Naive thymus-derived CD4-positive, alpha-beta T cell (primary cell): ENCODE measurements at regions of chr3 and their contacts with region 1.

Region 1: DNA sequence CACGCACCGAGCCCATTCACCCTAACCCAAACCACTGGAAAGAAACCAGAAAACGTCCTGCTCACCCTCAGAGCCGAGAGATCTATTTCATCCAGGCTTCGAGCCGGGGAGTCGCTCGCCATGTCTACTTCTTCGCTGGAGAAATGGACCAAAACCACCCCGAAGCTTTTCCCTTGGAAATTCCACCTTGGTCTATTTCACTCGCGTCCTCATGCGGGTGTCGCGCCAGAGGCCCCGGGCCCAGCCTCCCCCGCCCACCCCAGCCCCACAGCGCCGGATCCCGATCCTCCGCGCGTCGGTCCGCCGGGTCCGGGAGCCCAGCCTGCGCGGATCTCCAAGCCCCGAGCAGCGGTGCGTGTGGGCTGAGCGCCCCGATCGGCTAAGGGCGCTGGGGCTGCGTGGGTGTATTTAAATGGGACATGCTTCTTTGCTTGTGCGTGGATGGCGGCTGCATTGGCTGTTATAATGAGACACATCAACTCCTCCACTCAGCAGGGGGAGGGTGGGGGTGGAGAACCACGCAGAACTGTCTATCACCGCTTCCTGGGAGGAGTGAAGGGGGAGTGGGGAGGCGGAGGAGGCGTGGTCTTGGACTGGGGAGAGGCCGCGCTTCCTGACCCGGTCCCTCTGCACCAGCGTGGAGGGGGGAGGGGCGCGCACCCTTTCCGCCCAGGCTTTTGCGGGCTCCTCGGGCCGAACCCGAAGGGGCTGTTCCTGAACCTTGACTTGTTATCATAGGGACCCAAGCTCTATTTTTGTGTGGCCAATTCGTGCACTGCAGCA is at the start of gene TNIK:
- DNase-seq: peak; percentile 73 to 99 (median 91)
- ATAC-seq: peak; percentile 92
- H3K4me3 ChIP-seq: peak within 1 kb of the TSS; percentile 87
- H3K4me3 Mint-ChIP-seq: peak within 1 kb of the TSS; percentile 91 to 98 (median 94)
- H3K27ac ChIP-seq: peak within 1 kb of the TSS; percentile 81
- H3K27ac Mint-ChIP-seq: peak within 1 kb of the TSS; percentile 88 to 96 (median 91)
- H3K4me1 ChIP-seq: peaks cover 15 to 29% of the 10 kb centered on the region in 2 donors
- H3K4me1 Mint-ChIP-seq: peaks cover 19 to 46% (median 45%) of the 10 kb centered on the region in 7 donors
- H3K27me3 ChIP-seq: no peaks in the 10 kb centered on the region
- H3K27me3 Mint-ChIP-seq: no peaks in the 10 kb centered on the region
- total RNA-seq, gene TNIK: 61.6 to 74.9 (median 73.6) TPM

Region 2: GRCh38 chr3:170357176-170357919 is 1102.8 kb before region 1 on chr3 and contains the start of gene SKIL:
- CTCF ChIA-PET with region 1: no interaction called
- POLR2A ChIA-PET with region 1: no interaction called
- intact Hi-C with region 1: loop called in 1 of 2 experiments (anchors 1 kb)
- DNase-seq: peak; percentile 93 to 98 (median 96)
- ATAC-seq: peak; percentile 84
- H3K4me3 ChIP-seq: peak within 1 kb of the TSS; percentile 63
- H3K4me3 Mint-ChIP-seq: peak within 1 kb of the TSS; percentile 80 to 96 (median 94)
- H3K27ac ChIP-seq: peak within 1 kb of the TSS; percentile 99
- H3K27ac Mint-ChIP-seq: peak within 1 kb of the TSS; percentile 91 to 99 (median 97)
- H3K4me1 ChIP-seq: peaks cover 7 to 13% of the 10 kb centered on the region in 2 donors
- H3K4me1 Mint-ChIP-seq: peaks cover 28 to 68% (median 60%) of the 10 kb centered on the region in 7 donors
- H3K27me3 ChIP-seq: no peaks in the 10 kb centered on the region
- H3K27me3 Mint-ChIP-seq: peaks cover 0 to 26% (median 0%) of the 10 kb centered on the region in 5 donors
- total RNA-seq, gene SKIL: 19.1 to 80.5 (median 40.9) TPM

Region 3: GRCh38 chr3:170414202-170414663 is 1045.9 kb before region 1 on chr3:
- CTCF ChIA-PET with region 1: no interaction called
- POLR2A ChIA-PET with region 1: no interaction called
- intact Hi-C with region 1: no loop called
- DNase-seq: peak in 6 of 9 donors; percentile 25 to 58 (median 48)
- ATAC-seq: peak; percentile 75
- H3K4me3 ChIP-seq: no peak overlapping the region
- H3K4me3 Mint-ChIP-seq: no peak overlapping the region
- H3K27ac ChIP-seq: no peak overlapping the region
- H3K27ac Mint-ChIP-seq: no peak overlapping the region
- H3K4me1 ChIP-seq: peaks cover 4 to 7% of the 10 kb centered on the region in 2 donors
- H3K4me1 Mint-ChIP-seq: peaks cover 5 to 15% (median 7%) of the 10 kb centered on the region in 7 donors
- H3K27me3 ChIP-seq: peaks cover 0 to 8% of the 10 kb centered on the region in 2 donors
- H3K27me3 Mint-ChIP-seq: peaks cover 14 to 40% (median 17%) of the 10 kb centered on the region in 5 donors

Region 4: DNA sequence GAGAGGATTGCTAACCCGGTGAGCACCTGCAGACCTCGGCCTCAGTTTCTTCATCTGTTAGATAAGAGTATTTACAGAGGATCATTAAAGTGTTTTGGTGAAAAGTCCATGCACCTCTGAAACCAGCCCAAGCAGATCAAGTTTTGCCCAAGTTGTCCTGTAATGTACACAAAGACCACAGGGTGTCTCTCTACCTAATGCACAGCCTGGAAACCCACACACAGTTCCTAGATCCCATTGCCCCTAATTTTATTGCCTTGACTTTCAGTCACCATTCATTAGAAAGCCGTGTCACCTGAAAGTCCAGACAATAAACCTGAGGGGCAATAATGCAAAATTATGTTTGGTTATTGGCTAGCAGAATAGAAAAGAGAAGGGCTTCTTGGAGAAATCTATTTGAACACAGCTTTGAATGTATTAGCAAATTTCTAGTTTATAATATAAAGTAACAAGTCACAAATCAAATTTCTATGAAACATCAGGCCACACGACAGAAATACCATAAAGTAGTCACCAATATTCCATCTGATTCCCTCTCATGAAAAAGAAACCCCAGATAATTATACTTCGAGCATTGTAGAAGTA is 272.3 kb before region 1 on chr3:
- CTCF ChIA-PET with region 1: interaction called, 3 read pairs
- POLR2A ChIA-PET with region 1: interaction called, 5 read pairs
- intact Hi-C with region 1: loop called (anchors 1 to 2 kb)
- DNase-seq: peak in 5 of 9 donors; percentile 6 to 43 (median 31)
- ATAC-seq: peak; percentile 68
- H3K4me3 ChIP-seq: no peak overlapping the region
- H3K4me3 Mint-ChIP-seq: no peak overlapping the region
- H3K27ac ChIP-seq: no peak overlapping the region
- H3K27ac Mint-ChIP-seq: no peak overlapping the region
- H3K4me1 ChIP-seq: no peaks in the 10 kb centered on the region
- H3K4me1 Mint-ChIP-seq: peaks cover 9 to 50% (median 19%) of the 10 kb centered on the region in 7 donors
- H3K27me3 ChIP-seq: no peaks in the 10 kb centered on the region
- H3K27me3 Mint-ChIP-seq: no peaks in the 10 kb centered on the region

Region 5: DNA sequence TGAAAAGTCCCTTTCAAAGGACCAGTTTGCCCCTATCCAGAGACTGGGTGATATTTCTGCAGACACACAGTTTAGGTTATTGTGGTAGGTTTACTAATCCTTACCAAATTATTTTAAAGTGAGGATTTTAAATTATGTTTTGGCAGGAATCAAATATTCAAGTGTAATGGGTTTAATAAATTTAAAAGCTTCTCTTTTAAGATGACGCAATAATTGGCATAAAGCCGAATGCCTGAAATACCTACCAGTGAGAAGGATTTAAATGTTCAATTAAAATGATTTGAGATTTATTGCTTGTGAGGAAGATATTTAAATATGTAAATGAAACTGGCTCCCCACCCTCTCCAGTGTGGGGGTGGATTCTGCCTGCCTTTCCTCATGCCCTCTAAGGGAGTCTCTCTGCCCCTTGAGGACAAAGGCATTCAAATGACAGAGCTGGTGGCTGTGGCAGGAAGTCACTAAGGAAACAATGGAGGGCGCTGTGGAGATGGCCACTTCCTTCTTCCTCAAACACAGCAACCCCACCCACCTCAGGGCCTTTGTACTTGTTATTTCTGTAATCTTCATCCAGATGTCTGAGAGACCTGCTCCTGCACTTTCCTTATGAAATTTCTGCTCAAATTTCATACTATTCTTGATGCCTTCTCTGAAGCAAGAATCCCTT is 131.6 kb before region 1 on chr3:
- CTCF ChIA-PET with region 1: no interaction called
- POLR2A ChIA-PET with region 1: interaction called, 4 read pairs
- intact Hi-C with region 1: loop called (anchors 1 kb)
- DNase-seq: peak in 8 of 9 donors; percentile 26 to 68 (median 58)
- ATAC-seq: peak; percentile 93
- H3K4me3 ChIP-seq: no peak overlapping the region
- H3K4me3 Mint-ChIP-seq: peak overlapping the region in 9 of 10 donors; percentile 13 to 71 (median 46)
- H3K27ac ChIP-seq: no peak overlapping the region
- H3K27ac Mint-ChIP-seq: peak overlapping the region in 6 of 9 donors; percentile 48 to 83 (median 62)
- H3K4me1 ChIP-seq: peaks cover 12 to 17% of the 10 kb centered on the region in 2 donors
- H3K4me1 Mint-ChIP-seq: peaks cover 20 to 81% (median 71%) of the 10 kb centered on the region in 7 donors
- H3K27me3 ChIP-seq: no peaks in the 10 kb centered on the region
- H3K27me3 Mint-ChIP-seq: no peaks in the 10 kb centered on the region

Region 6: GRCh38 chr3:171543759-171544654 is 83.9 kb after region 1 on chr3:
- CTCF ChIA-PET with region 1: no interaction called
- POLR2A ChIA-PET with region 1: no interaction called
- intact Hi-C with region 1: no loop called
- DNase-seq: no peak
- ATAC-seq: no peak
- H3K4me3 ChIP-seq: no peak overlapping the region
- H3K4me3 Mint-ChIP-seq: no peak overlapping the region
- H3K27ac ChIP-seq: no peak overlapping the region
- H3K27ac Mint-ChIP-seq: peak overlapping the region in 1 of 9 donors; percentile 9
- H3K4me1 ChIP-seq: peaks cover 0 to 4% of the 10 kb centered on the region in 2 donors
- H3K4me1 Mint-ChIP-seq: peaks cover 0 to 12% (median 5%) of the 10 kb centered on the region in 7 donors
- H3K27me3 ChIP-seq: no peaks in the 10 kb centered on the region
- H3K27me3 Mint-ChIP-seq: peaks cover 0 to 2% (median 0%) of the 10 kb centered on the region in 5 donors

Region 7: DNA sequence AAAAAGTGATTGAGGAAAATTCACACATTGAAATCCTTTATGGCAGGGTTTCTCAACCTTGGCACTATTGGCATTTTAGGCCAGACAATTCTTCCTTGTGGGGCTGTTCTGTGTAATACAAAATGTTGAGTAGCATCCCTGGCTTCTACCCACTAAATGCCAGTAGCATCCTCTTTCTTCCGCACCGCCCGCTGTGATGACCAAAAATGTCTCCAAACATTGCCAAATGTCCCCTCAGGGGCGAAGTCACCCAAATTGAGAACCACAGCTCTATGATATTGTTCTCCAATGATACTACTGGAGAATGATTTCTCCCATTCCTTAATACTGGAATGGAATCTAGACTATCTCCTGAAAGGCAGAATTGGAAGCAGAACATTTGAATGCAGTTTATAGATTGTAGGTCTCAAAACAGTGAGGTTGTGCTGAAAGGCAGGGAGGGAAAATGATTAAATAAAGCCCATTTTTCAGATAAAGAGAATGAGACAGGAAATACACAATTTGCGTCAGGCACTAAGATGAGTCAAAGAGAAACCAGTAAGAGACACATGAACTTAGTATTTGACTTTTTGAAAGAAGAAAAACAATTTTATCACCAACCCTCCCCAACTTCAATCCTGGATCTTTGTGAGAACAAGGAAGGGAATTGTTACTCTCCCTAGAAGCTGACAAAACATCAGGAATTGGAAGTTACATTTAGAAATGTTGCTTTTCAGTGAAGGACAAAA is 101.6 kb after region 1 on chr3:
- CTCF ChIA-PET with region 1: interaction called, 3 read pairs
- POLR2A ChIA-PET with region 1: interaction called, 3 read pairs
- intact Hi-C with region 1: loop called (anchors 1 kb)
- DNase-seq: peak in 1 of 9 donors; percentile 4
- ATAC-seq: no peak
- H3K4me3 ChIP-seq: no peak overlapping the region
- H3K4me3 Mint-ChIP-seq: peak overlapping the region in 4 of 10 donors; percentile 8 to 83 (median 14)
- H3K27ac ChIP-seq: no peak overlapping the region
- H3K27ac Mint-ChIP-seq: peak overlapping the region in 7 of 9 donors; percentile 29 to 97 (median 65)
- H3K4me1 ChIP-seq: peaks cover 1 to 4% of the 10 kb centered on the region in 2 donors
- H3K4me1 Mint-ChIP-seq: peaks cover 8 to 69% (median 16%) of the 10 kb centered on the region in 7 donors
- H3K27me3 ChIP-seq: no peaks in the 10 kb centered on the region
- H3K27me3 Mint-ChIP-seq: no peaks in the 10 kb centered on the region

Region 8: GRCh38 chr3:171671709-171672108 is 211.6 kb after region 1 on chr3:
- CTCF ChIA-PET with region 1: no interaction called
- POLR2A ChIA-PET with region 1: no interaction called
- intact Hi-C with region 1: no loop called
- DNase-seq: no peak
- ATAC-seq: no peak
- H3K4me3 ChIP-seq: no peak overlapping the region
- H3K4me3 Mint-ChIP-seq: no peak overlapping the region
- H3K27ac ChIP-seq: no peak overlapping the region
- H3K27ac Mint-ChIP-seq: no peak overlapping the region
- H3K4me1 ChIP-seq: no peaks in the 10 kb centered on the region
- H3K4me1 Mint-ChIP-seq: no peaks in the 10 kb centered on the region
- H3K27me3 ChIP-seq: no peaks in the 10 kb centered on the region
- H3K27me3 Mint-ChIP-seq: peaks cover 0 to 3% (median 0%) of the 10 kb centered on the region in 5 donors

Region 9: GRCh38 chr3:172511783-172512762 is 1051.9 kb after region 1 on chr3:
- CTCF ChIA-PET with region 1: no interaction called
- POLR2A ChIA-PET with region 1: no interaction called
- intact Hi-C with region 1: loop called in 1 of 2 experiments (anchors 10 kb)
- DNase-seq: peak in 7 of 9 donors; percentile 28 to 76 (median 48)
- ATAC-seq: peak; percentile 87
- H3K4me3 ChIP-seq: peak overlapping the region; percentile 2
- H3K4me3 Mint-ChIP-seq: peak overlapping the region; percentile 62 to 93 (median 80)
- H3K27ac ChIP-seq: peak overlapping the region; percentile 61
- H3K27ac Mint-ChIP-seq: peak overlapping the region; percentile 88 to 100 (median 93)
- H3K4me1 ChIP-seq: peaks cover 52 to 56% of the 10 kb centered on the region in 2 donors
- H3K4me1 Mint-ChIP-seq: peaks cover 65 to 91% (median 84%) of the 10 kb centered on the region in 7 donors
- H3K27me3 ChIP-seq: no peaks in the 10 kb centered on the region
- H3K27me3 Mint-ChIP-seq: no peaks in the 10 kb centered on the region